Mammary epithelial cell (primary cell): ENCODE measurements at regions of chr21 and their contacts with region 1.

Region 1: DNA sequence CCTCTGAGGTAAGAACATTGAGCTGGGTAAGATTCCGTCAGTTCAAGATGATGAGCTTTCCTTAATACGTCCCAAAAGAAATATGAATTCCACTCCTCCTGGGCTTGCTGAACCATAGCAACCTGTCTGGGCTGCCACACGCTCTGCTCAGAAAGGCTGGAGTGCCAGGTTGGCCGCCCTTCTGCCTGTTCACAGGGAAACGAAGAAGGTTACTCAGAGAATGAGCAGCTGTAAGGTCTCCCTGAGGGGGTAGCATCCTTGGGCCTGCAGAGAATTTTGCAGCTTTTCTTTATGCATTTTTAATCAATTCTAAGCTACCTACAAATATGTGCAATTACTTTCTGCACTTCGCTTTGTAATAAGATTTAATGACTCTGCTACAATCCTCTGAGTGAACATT is 130.7 kb upstream of the BACE2 start:
- DNase-seq: no peak
- H3K4me3 ChIP-seq: no peak overlapping the region
- H3K27ac ChIP-seq: no peak overlapping the region
- H3K4me1 ChIP-seq: peaks cover 4% of the 10 kb centered on the region
- H3K27me3 ChIP-seq: no peaks in the 10 kb centered on the region
- CTCF ChIP-seq: no peak

Region 2: DNA sequence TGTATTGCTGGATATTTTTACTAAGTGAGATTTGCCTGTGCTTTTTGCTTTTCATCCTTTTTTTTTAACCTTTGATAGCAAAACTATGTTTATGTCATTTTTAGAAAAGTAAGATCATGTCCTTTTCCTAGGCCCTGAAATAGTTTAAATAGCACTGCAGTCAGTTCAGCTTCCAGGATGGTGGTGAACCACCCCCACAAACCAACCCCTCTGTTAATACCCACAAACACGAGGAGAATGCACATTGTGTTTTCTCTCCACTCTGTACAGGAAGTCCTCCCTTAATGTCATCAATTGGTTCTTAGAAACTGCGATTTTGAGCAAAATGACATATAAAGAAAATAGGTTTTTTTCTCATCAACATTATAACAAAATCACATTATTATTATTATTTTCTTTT is 72.5 kb before region 1 on chr21:
- CTCF ChIA-PET with region 1: no interaction called
- dilution Hi-C with region 1: no loop called
- in situ Hi-C with region 1: no loop called
- intact Hi-C with region 1: no loop called
- DNase-seq: no peak
- H3K4me3 ChIP-seq: no peak overlapping the region
- H3K27ac ChIP-seq: no peak overlapping the region
- H3K4me1 ChIP-seq: peaks cover 3% of the 10 kb centered on the region
- H3K27me3 ChIP-seq: no peaks in the 10 kb centered on the region
- CTCF ChIP-seq: no peak

Region 3: GRCh38 chr21:41011951-41012366 is 25.3 kb before region 1 on chr21:
- CTCF ChIA-PET with region 1: no interaction called
- dilution Hi-C with region 1: no loop called
- in situ Hi-C with region 1: no loop called
- intact Hi-C with region 1: no loop called
- DNase-seq: no peak
- H3K4me3 ChIP-seq: no peak overlapping the region
- H3K27ac ChIP-seq: no peak overlapping the region
- H3K4me1 ChIP-seq: no peaks in the 10 kb centered on the region
- H3K27me3 ChIP-seq: no peaks in the 10 kb centered on the region
- CTCF ChIP-seq: no peak

Region 4: DNA sequence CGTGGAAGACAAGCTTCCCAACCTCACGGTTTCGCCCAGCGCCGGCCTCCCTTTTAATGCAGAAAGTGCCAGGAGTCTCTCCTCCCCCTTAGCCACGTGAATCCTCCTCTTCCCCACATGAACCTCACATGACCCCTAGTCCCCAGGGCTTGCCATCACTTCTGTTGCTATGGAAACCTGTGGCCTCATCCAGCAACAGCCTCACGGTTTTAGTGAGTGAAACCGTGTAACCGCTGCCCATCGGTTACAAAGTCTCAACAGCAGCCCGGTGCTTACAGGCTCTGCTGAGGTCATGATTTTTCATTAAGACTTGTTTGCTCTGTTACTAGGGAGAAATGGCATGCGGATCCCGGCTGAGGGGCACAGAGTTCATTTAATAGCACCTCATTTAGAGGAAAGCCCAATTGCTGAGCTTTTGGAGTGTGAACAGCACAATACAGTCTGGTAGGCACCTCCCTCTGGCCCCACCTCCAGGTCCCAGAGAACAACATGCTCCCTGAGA is 12.4 kb before region 1 on chr21:
- CTCF ChIA-PET with region 1: no interaction called
- dilution Hi-C with region 1: no loop called
- in situ Hi-C with region 1: no loop called
- intact Hi-C with region 1: no loop called
- DNase-seq: peak; percentile 33
- H3K4me3 ChIP-seq: no peak overlapping the region
- H3K27ac ChIP-seq: no peak overlapping the region
- H3K4me1 ChIP-seq: peaks cover 10% of the 10 kb centered on the region
- H3K27me3 ChIP-seq: no peaks in the 10 kb centered on the region
- CTCF ChIP-seq: no peak

Region 5: DNA sequence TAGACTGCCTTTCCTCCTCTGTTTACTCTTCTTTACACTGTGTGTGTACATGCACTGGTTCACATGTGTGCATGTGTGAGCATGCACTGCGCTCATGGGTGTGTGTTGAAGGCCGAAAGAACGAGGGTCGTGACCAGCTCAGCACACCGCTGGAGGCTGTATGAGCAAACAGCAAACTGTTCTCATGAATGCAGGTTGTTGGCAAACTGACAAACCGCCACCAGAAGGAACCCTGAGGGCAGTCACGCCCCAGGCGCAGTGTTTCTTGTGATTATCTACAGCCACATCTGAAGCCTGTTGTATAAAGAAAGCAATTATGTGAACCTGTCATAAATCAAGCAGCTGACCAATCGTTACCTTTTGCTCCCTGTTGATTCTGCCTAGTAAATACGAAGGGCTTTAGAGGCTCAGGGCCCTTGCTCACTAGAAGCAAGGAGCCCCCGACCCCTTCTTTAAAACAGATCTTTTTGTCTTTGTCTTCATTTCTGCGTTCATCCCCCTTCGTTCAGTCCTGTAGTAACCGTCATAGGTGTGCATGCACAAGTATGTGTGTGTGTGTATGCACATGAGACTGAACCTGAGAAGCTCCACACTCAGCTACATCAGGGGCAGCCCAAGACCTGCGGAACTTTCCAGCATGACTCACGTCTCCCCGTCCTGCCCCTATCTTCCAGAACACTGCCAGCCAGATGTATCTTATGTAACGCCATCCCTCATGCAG is 746.4 kb after region 1 on chr21:
- CTCF ChIA-PET with region 1: no interaction called
- dilution Hi-C with region 1: no loop called
- in situ Hi-C with region 1: no loop called
- intact Hi-C with region 1: loop called (anchors 5 kb)
- DNase-seq: peak; percentile 98
- H3K4me3 ChIP-seq: no peak overlapping the region
- H3K27ac ChIP-seq: peak overlapping the region; percentile 81
- H3K4me1 ChIP-seq: peaks cover 41% of the 10 kb centered on the region
- H3K27me3 ChIP-seq: no peaks in the 10 kb centered on the region
- CTCF ChIP-seq: no peak